PC-9 (cell line): ENCODE measurements at regions of chr2 and their contacts with region 1.

Region 1: GRCh38 chr2:58081000-58081399 is 34.4 kb downstream of the VRK2 start:
- DNase-seq: no peak
- H3K4me3 ChIP-seq: no peak overlapping the region
- H3K27ac ChIP-seq: no peak overlapping the region
- H3K4me1 ChIP-seq: no peaks in the 10 kb centered on the region
- H3K27me3 ChIP-seq: no peaks in the 10 kb centered on the region
- CTCF ChIP-seq: no peak

Region 2: DNA sequence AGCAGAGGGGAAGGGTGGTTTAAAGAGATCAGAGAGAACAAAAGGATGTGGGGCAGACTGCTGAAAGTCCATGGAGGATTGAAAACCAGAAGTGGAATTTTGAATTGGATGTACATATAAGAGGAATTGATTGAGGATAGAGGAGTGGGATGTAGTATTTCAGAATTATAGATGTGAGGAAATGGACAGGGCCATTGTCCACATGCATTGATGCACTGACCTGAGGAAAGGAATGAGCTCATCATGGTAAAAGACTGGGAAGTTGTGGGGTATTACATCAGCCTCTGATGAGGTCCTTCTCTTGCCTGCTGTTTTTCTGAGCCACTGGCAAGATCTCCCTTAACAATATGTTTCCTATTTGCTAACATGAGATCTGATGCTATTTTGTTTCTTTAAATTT is 525.8 kb after region 1 on chr2:
- CTCF ChIA-PET with region 1: no interaction called
- POLR2A ChIA-PET with region 1: interaction called, 35 read pairs
- intact Hi-C with region 1: no loop called
- DNase-seq: no peak
- H3K4me3 ChIP-seq: no peak overlapping the region
- H3K27ac ChIP-seq: no peak overlapping the region
- H3K4me1 ChIP-seq: no peaks in the 10 kb centered on the region
- H3K27me3 ChIP-seq: peaks cover 5% of the 10 kb centered on the region; the same call in 1 of the 2 replicates
- CTCF ChIP-seq: no peak